ENCODE measurements at regions of chr13 and their contacts with region 1.

Region 1: DNA sequence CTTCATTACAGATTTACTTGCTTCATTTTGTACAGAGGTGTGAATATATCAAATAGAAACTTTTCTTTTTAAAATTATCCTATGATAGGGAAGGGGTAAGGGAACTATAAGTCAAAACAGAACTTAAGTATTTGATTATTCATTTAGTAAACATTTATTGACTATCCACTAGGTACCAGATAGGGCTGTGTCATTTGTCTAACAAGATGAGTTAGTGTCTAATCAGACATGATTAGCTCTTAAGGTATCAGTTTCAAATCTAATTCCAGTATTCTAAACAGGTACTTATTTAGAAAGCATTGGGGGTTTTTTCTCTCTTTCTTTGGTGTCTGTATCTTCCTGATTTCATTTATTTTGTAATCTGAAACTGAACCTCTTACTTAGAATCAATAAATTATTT is 32.2 kb downstream of the CDADC1 start:
- DNase-seq: no peak
- ATAC-seq: no peak
- H3K4me3 ChIP-seq: no peak overlapping the region
- H3K27ac ChIP-seq: no peak overlapping the region
- H3K4me1 ChIP-seq: no peaks in the 10 kb centered on the region
- H3K27me3 ChIP-seq: no peaks in the 10 kb centered on the region
- CTCF ChIP-seq: no peak

Region 2: GRCh38 chr13:49098771-49099512 is 180.9 kb before region 1 on chr13:
- intact Hi-C with region 1: loop called in 4 of 10 experiments (anchors 5 to 10 kb)
- DNase-seq: no peak
- ATAC-seq: peak in 4 of 8 donors; percentile 59 to 68 (median 62)
- H3K4me3 ChIP-seq: no peak overlapping the region
- H3K27ac ChIP-seq: peak overlapping the region; percentile 37 to 84 (median 76)
- H3K4me1 ChIP-seq: peaks cover 10 to 40% (median 30%) of the 10 kb centered on the region in 9 donors
- H3K27me3 ChIP-seq: no peaks in the 10 kb centered on the region
- CTCF ChIP-seq: peak; percentile 11 to 69 (median 50)

Region 3: DNA sequence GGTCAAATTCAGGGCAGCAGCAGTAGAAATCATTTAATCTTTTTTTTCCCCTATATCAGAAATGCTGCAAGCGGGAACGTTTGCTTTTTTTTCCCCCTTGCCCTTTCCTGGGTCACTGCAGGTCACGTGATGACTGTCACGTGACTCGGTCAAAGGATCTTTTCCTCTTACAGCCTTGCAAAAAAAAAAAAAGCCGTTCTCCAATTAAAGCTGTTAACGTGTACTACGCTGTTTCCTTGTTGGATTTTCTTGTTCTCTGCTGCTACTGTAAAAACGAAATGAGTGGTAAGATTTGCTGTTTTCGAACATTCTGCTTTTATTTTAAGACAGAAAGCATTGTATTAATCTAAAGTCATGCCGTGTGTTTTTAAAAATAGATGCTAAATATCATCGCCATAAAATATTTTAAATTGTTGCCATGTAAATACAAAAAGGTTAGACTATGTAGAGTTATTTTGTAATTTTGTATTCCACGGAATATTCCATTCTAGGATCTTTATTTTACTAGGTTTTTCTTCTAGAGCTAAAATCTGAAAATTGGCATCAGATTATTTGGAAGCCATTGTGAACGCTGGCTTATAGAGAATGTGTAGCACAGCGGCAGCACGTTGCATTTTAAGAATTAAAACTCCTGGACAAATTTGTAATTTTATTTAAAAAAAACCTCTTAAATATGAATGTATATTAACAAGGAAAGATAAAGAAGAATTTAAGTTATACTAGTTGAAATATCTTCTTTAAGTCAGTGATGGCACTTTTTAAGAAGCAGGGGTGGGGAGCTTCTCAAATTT is 169.6 kb before region 1 on chr13:
- intact Hi-C with region 1: loop called in 2 of 10 experiments (anchors 10 kb)
- DNase-seq: peak; percentile 64 to 84
- ATAC-seq: peak; percentile 60 to 94 (median 86)
- H3K4me3 ChIP-seq: peak overlapping the region; percentile 41 to 70 (median 57)
- H3K27ac ChIP-seq: peak overlapping the region in 9 of 10 donors; percentile 50 to 85 (median 57)
- H3K4me1 ChIP-seq: peaks cover 3 to 52% (median 36%) of the 10 kb centered on the region in 9 donors
- H3K27me3 ChIP-seq: no peaks in the 10 kb centered on the region
- CTCF ChIP-seq: no peak

Region 4: DNA sequence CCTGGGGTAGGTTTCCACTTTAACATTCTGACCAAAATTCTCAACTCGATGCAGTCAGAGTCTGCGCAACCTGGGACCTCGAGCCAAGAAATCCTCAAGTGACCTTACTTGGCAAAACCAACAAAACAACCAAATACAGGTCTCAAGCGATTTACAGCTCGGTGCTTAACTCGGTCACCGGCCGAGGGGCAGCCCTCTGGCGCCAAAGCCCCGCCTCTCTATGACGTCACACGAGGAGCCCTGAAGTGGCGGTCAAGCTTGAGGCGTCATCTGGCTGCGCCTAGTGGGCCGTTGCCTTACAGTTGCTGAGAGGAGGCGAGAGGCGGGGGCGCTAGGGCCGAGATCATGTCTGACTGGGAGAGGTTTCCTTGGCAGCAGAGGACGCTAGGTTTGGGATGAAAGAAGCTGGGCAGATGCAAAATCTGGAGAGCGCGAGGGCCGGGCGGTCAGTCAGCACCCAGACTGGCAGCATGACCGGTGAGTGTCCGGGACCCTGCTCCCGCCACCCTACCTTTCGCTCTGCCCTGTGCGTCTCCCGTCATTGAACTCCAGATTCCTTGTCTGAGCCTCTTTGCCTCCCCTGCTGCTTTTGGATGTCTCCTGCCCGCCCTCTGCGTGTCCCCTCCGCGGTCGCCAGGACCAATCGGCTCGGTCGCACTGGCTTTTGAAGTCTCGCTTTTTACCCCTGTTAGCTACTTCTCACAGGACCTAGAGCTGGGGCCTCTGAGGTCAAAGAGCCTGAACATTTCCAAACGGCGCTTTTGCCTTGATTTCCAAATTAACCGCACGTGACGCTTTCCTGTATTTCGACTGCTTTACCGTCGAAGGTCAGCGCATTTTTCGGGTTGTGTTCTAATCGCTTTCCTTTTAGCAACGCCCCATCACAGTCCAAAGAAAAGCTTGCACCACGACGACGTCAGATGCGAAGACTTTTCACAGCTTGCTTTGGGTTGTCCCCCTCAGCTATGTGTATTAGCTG is 32.0 kb before region 1 on chr13 and contains the start of gene CDADC1:
- intact Hi-C with region 1: loop called in 1 of 10 experiments (anchors 5 kb)
- DNase-seq: peak; percentile 98 to 99
- ATAC-seq: peak; percentile 98 to 100 (median 99)
- H3K4me3 ChIP-seq: peak within 1 kb of the TSS; percentile 53 to 93 (median 87)
- H3K27ac ChIP-seq: peak within 1 kb of the TSS; percentile 70 to 95 (median 89)
- H3K4me1 ChIP-seq: peaks cover 4 to 34% (median 18%) of the 10 kb centered on the region in 9 donors
- H3K27me3 ChIP-seq: no peaks in the 10 kb centered on the region
- CTCF ChIP-seq: peak in 3 of 9 donors; percentile 3 to 16 (median 9)
- total RNA-seq, gene CDADC1: 6.6 to 12.7 (median 9.4) TPM

Measured in heart right ventricle (tissue), 16 donors.